Activated CD4-positive, alpha-beta T cell treated with anti-CD3 and anti-CD28 coated beads, Interleukin-2, amount 10 ng/mL, durations not matched to agents 7 days and 5 days (primary cell): ENCODE measurements at regions of chr1 and their contacts with region 1.

Region 1: GRCh38 chr1:110554871-110555801 is 36.2 kb upstream of the KCNA10 start:
- DNase-seq: peak; percentile 46
- H3K4me3 Mint-ChIP-seq: no peak overlapping the region
- H3K27ac Mint-ChIP-seq: no peak overlapping the region
- H3K4me1 Mint-ChIP-seq: peaks cover 2% of the 10 kb centered on the region
- H3K27me3 Mint-ChIP-seq: peaks cover 50% of the 10 kb centered on the region

Region 2: GRCh38 chr1:110565565-110565964 is 10.4 kb after region 1 on chr1:
- CTCF ChIA-PET with region 1: interaction called, 11 read pairs
- POLR2A ChIA-PET with region 1: no interaction called
- DNase-seq: no peak
- H3K4me3 Mint-ChIP-seq: no peak overlapping the region
- H3K27ac Mint-ChIP-seq: no peak overlapping the region
- H3K4me1 Mint-ChIP-seq: no peaks in the 10 kb centered on the region
- H3K27me3 Mint-ChIP-seq: peaks cover 37% of the 10 kb centered on the region